PC-9 (cell line): ENCODE measurements at regions of chr14 and their contacts with region 1.

Region 1: GRCh38 chr14:75359098-75359497 is 68.7 kb upstream of the JDP2 start:
- DNase-seq: no peak
- H3K4me3 ChIP-seq: no peak overlapping the region
- H3K27ac ChIP-seq: no peak overlapping the region
- H3K4me1 ChIP-seq: no peaks in the 10 kb centered on the region
- H3K27me3 ChIP-seq: peaks cover 14% of the 10 kb centered on the region; the same call in 1 of the 2 replicates
- CTCF ChIP-seq: no peak

Region 2: GRCh38 chr14:75188520-75189268 is 170.4 kb before region 1 on chr14:
- CTCF ChIA-PET with region 1: no interaction called
- POLR2A ChIA-PET with region 1: no interaction called
- intact Hi-C with region 1: no loop called
- DNase-seq: no peak
- H3K4me3 ChIP-seq: no peak overlapping the region
- H3K27ac ChIP-seq: no peak overlapping the region
- H3K4me1 ChIP-seq: peaks cover 31% of the 10 kb centered on the region
- H3K27me3 ChIP-seq: no peaks in the 10 kb centered on the region
- CTCF ChIP-seq: no peak

Region 3: GRCh38 chr14:75299059-75299458 is 60.0 kb before region 1 on chr14:
- CTCF ChIA-PET with region 1: no interaction called
- POLR2A ChIA-PET with region 1: no interaction called
- intact Hi-C with region 1: no loop called
- DNase-seq: peak; percentile 43 to 89
- H3K4me3 ChIP-seq: no peak overlapping the region
- H3K27ac ChIP-seq: peak overlapping the region; percentile 21
- H3K4me1 ChIP-seq: peaks cover 41% of the 10 kb centered on the region
- H3K27me3 ChIP-seq: no peaks in the 10 kb centered on the region
- CTCF ChIP-seq: no peak

Region 4: GRCh38 chr14:76307786-76308780 is 949.0 kb after region 1 on chr14:
- CTCF ChIA-PET with region 1: no interaction called
- POLR2A ChIA-PET with region 1: interaction called, 11 read pairs
- intact Hi-C with region 1: no loop called
- DNase-seq: no peak
- H3K4me3 ChIP-seq: no peak overlapping the region
- H3K27ac ChIP-seq: no peak overlapping the region
- H3K4me1 ChIP-seq: no peaks in the 10 kb centered on the region
- H3K27me3 ChIP-seq: peaks cover 100% of the 10 kb centered on the region
- CTCF ChIP-seq: no peak